Mucosa of descending colon (tissue), 3 donors: ENCODE measurements at regions of chr4 and their contacts with region 1.

Region 1: DNA sequence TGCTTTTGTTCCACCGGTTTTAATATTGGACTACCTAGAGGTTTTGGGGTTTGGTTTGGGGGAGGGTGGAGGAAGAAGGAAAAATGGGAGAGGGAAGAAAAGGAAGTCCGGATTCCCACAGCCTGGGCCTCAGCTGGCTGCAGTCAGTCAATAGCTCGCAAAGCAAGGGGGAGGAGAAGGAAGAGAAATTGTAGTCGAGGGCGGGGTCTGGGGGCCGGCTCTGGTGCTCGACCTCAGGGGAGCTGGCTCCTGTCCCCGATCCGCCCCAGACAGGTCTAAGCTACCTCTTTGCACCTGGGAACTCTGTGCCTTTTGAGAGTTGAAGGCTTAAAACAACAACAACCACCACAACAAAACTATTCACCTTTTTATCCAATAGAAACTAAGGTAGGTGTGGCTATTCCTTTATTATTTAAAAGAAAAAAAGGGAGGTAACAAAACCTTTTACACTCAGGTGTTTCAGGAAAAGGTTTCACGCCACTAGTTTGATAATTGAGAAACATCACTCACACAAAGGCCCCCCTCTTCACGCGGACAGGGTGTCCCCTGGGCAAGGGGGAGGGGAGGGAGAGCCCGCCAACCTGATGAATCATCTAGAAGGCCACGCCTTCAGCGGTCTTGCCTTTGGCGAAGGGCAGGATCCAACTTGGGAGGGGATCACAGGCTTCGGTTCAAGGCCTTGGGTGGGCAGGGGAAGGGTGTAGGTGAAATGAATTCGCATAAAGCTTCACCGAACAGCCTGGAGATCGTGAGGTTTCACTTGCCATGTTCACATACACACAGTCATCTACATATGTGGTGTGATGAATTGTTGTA is 1.6 kb upstream of the LNX1 start:
- DNase-seq: peak; percentile 78 to 82 (median 78)
- ATAC-seq: peak; percentile 71
- H3K4me3 ChIP-seq: no peak overlapping the region
- H3K4me1 ChIP-seq: peaks cover 2% of the 10 kb centered on the region
- CTCF ChIP-seq: no peak

Region 2: GRCh38 chr4:52996261-52996892 is 596.5 kb before region 1 on chr4:
- intact Hi-C with region 1: no loop called
- DNase-seq: no peak
- ATAC-seq: no peak
- H3K4me3 ChIP-seq: no peak overlapping the region
- H3K4me1 ChIP-seq: no peaks in the 10 kb centered on the region
- CTCF ChIP-seq: no peak

Region 3: GRCh38 chr4:53640576-53641453 is 47.9 kb after region 1 on chr4:
- intact Hi-C with region 1: loop called in 1 of 2 experiments (anchors 10 kb)
- DNase-seq: peak in 1 of 3 donors; percentile 29
- ATAC-seq: no peak
- H3K4me3 ChIP-seq: no peak overlapping the region
- H3K4me1 ChIP-seq: peaks cover 6% of the 10 kb centered on the region
- CTCF ChIP-seq: no peak

Region 4: DNA sequence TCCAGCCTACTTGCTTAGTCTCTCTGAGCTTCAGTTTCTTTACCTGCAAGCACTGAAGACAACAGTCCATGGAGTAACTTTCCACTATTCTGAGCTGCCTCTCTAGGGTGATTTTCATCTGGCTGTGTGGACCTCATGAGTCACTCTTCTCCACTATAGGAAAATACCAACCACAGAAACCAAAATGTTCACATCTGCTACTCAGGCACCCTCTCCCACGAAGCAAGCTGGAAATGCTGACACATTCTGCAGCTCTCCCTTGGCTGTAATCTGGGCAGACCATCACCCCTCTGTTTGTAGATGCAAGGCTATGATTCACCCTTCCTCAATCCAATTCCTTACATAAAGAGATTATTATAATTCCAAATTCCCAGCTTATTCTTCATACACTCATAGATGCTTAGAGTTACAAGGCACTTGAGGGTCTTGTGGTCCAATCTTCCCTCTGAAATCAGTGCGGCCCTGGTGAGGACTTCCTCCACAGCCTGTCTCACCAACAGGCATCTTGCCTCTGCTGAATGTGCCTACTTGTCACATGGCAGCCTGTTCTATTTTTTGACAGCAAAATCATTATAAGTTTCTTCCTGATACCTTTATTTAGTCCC is 95.4 kb after region 1 on chr4:
- intact Hi-C with region 1: no loop called
- DNase-seq: no peak
- ATAC-seq: peak; percentile 59
- H3K4me3 ChIP-seq: no peak overlapping the region
- H3K4me1 ChIP-seq: no peaks in the 10 kb centered on the region
- CTCF ChIP-seq: no peak

Region 5: DNA sequence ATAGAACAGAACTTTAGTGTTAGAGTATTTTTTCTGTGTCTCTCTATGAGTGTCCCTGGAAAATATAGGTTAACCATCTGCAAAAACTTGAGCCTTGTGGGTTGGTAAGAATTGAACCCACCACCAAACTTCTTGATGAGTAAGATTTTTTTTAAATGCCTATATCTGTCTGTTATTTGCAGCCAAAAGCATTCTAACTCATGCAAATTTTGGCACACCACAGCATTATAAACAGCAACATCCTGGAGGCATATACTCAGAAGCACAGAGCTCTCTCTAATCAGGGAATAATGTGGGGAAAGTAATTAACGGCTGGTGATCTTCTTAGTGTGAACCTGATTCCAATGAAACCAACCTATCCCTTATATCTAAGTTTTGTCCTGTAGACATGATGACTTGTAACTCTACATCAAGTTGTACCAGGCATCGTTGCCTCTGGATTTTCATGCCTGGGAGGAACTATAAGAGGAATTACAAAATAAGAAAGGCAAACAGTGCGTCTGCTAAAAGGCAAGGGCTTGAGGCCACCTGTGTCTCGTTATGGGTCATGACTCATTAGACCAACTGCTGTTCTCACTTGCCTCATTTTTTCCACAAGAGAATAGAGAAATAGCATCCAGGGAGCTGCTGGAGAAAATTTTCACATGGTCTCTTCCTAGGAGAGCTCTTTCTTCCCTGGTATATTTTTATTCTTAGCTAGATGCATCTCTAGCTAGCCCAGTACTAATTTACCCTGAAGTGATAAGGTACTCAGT is 269.1 kb after region 1 on chr4:
- intact Hi-C with region 1: no loop called
- DNase-seq: no peak
- ATAC-seq: peak; percentile 31
- H3K4me3 ChIP-seq: no peak overlapping the region
- H3K4me1 ChIP-seq: no peaks in the 10 kb centered on the region
- CTCF ChIP-seq: no peak